Ovary (tissue), 10 donors: ENCODE measurements at regions of chr12 and their contacts with region 1.

Region 1: GRCh38 chr12:32755654-32756475 is at the start of gene YARS2:
- DNase-seq: peak; percentile 90 to 95 (median 94)
- H3K4me3 ChIP-seq: peak within 1 kb of the TSS; percentile 64
- H3K27ac ChIP-seq: peak within 1 kb of the TSS; percentile 85 to 87
- H3K4me1 ChIP-seq: peaks cover 1% of the 10 kb centered on the region
- H3K27me3 ChIP-seq: no peaks in the 10 kb centered on the region
- CTCF ChIP-seq: peak; percentile 72 to 86 (median 86)
- EP300 ChIP-seq: no peak
- POLR2A ChIP-seq: peak; percentile 65
- total RNA-seq, gene YARS2: 10.6 to 19.8 (median 12.9) TPM

Region 2: DNA sequence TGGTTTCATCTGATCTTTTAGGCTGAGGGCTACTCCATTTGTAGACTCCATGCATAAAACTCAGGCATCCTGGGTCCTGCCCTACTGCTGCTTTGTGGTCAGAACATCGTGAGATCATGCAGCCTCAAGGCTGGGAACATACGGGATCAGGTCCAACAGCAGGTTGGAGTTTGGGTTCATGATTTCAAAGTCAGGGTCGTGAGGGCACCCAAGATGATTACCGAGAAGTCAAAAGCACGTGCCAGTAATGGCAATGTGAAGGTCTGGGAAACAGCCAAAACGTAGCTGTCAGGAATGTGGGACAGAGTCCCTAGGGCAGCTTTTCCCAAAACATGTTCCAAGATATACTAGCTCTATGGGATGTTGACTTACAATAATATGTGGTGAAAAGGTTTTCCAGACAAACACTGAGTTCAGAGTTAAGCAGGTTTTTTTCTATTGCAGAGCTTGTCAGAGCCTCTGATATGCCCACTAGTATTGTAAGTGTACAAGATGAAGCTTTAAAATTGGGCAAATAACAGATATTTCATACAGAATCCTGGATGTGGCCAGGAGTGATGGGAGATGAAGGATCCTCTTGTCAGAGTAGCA is 207.1 kb before region 1 on chr12:
- intact Hi-C with region 1: no loop called
- DNase-seq: peak; percentile 59 to 84 (median 74)
- H3K4me3 ChIP-seq: no peak overlapping the region
- H3K27ac ChIP-seq: peak overlapping the region in 1 of 2 donors; percentile 77
- H3K4me1 ChIP-seq: peaks cover 42% of the 10 kb centered on the region
- H3K27me3 ChIP-seq: no peaks in the 10 kb centered on the region
- CTCF ChIP-seq: no peak
- EP300 ChIP-seq: no peak
- POLR2A ChIP-seq: no peak

Region 3: GRCh38 chr12:32918890-32919801 is 163.3 kb after region 1 on chr12:
- intact Hi-C with region 1: loop called in 3 of 4 experiments (anchors 1 to 5 kb)
- DNase-seq: peak in 4 of 5 donors; percentile 23 to 40 (median 29)
- H3K4me3 ChIP-seq: no peak overlapping the region
- H3K27ac ChIP-seq: no peak overlapping the region
- H3K4me1 ChIP-seq: peaks cover 2% of the 10 kb centered on the region
- H3K27me3 ChIP-seq: no peaks in the 10 kb centered on the region
- CTCF ChIP-seq: peak in 2 of 3 donors; percentile 21 to 68
- EP300 ChIP-seq: no peak
- POLR2A ChIP-seq: no peak

Region 4: GRCh38 chr12:33419775-33420174 is 663.9 kb after region 1 on chr12:
- intact Hi-C with region 1: no loop called
- DNase-seq: no peak
- H3K4me3 ChIP-seq: no peak overlapping the region
- H3K27ac ChIP-seq: no peak overlapping the region
- H3K4me1 ChIP-seq: no peaks in the 10 kb centered on the region
- H3K27me3 ChIP-seq: no peaks in the 10 kb centered on the region
- CTCF ChIP-seq: no peak
- EP300 ChIP-seq: no peak
- POLR2A ChIP-seq: no peak

Region 5: GRCh38 chr12:34022079-34022830 is 1266.4 kb after region 1 on chr12 and contains the start of gene ALG10:
- intact Hi-C with region 1: loop called in 1 of 4 experiments (anchors 10 kb)
- DNase-seq: peak; percentile 95 to 96 (median 96)
- H3K4me3 ChIP-seq: peak within 1 kb of the TSS; percentile 72
- H3K27ac ChIP-seq: peak within 1 kb of the TSS; percentile 65 to 78
- H3K4me1 ChIP-seq: no peaks in the 10 kb centered on the region
- H3K27me3 ChIP-seq: no peaks in the 10 kb centered on the region
- CTCF ChIP-seq: peak; percentile 49 to 69 (median 51)
- EP300 ChIP-seq: no peak
- POLR2A ChIP-seq: peak; percentile 19
- total RNA-seq, gene ALG10: 8.2 to 12.3 (median 9.9) TPM